HepG2 (cell line): ENCODE measurements at regions of chr7 and their contacts with region 1.

Region 1: GRCh38 chr7:54758702-54759592 is at the start of gene SEC61G:
- DNase-seq: peak; percentile 93
- ATAC-seq: peak; percentile 97
- H3K4me3 ChIP-seq: peak within 1 kb of the TSS; percentile 93 to 98 (median 98)
- H3K27ac ChIP-seq: peak within 1 kb of the TSS; percentile 74
- H3K4me1 ChIP-seq: peaks cover 47% of the 10 kb centered on the region
- H3K27me3 ChIP-seq: no peaks in the 10 kb centered on the region; a peak in 2 of 5 replicates
- CTCF ChIP-seq: no peak
- EP300 ChIP-seq: peak in 1 of 2 experiments; percentile 10; a peak in 1 of 4 replicates
- POLR2A ChIP-seq: peak; percentile 90 to 91
- RAD21 ChIP-seq: peak; percentile 11; the same call in 1 of the 2 replicates
- total RNA-seq, gene SEC61G: 328 and 434 TPM in 2 replicates

Region 2: GRCh38 chr7:54743580-54743979 is 15.4 kb before region 1 on chr7:
- CTCF ChIA-PET with region 1: no interaction called
- POLR2A ChIA-PET with region 1: interaction called, 10 read pairs
- in situ Hi-C with region 1: no loop called
- intact Hi-C with region 1: no loop called
- DNase-seq: no peak
- ATAC-seq: no peak
- H3K4me3 ChIP-seq: no peak overlapping the region
- H3K27ac ChIP-seq: no peak overlapping the region
- H3K4me1 ChIP-seq: no peaks in the 10 kb centered on the region
- H3K27me3 ChIP-seq: no peaks in the 10 kb centered on the region
- CTCF ChIP-seq: no peak
- EP300 ChIP-seq: no peak
- POLR2A ChIP-seq: no peak
- RAD21 ChIP-seq: no peak

Region 3: DNA sequence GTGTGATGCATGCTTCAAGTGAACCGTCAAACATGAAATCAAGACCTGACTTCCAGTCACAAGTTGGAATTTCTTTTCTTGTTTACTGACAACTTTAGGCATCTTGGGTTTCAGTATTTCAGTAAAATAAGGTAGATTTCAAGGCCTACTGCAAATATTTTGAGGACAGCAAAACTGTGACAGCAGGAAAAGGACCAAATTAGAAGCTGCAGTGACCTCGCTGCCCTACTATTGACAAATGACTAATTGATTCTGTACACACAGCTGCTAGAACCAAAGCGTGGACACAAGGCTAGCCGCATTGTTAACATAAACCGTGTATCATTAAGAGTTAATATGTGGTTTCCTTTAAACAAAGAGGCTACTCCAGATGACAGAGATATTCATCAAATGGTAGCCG is 105.7 kb after region 1 on chr7:
- CTCF ChIA-PET with region 1: no interaction called
- POLR2A ChIA-PET with region 1: no interaction called
- in situ Hi-C with region 1: no loop called
- intact Hi-C with region 1: no loop called
- DNase-seq: peak; percentile 44
- ATAC-seq: peak; percentile 75
- H3K4me3 ChIP-seq: no peak overlapping the region
- H3K27ac ChIP-seq: no peak overlapping the region
- H3K4me1 ChIP-seq: peaks cover 10% of the 10 kb centered on the region
- H3K27me3 ChIP-seq: peaks cover 0 to 3% of the 10 kb centered on the region in 2 experiments; a peak in 2 of 5 replicates
- CTCF ChIP-seq: no peak
- EP300 ChIP-seq: peak in 1 of 2 experiments; percentile 62; a peak in 1 of 4 replicates
- POLR2A ChIP-seq: no peak
- RAD21 ChIP-seq: no peak

Region 4: GRCh38 chr7:55415173-55415778 is 656.3 kb after region 1 on chr7:
- CTCF ChIA-PET with region 1: no interaction called
- POLR2A ChIA-PET with region 1: no interaction called
- in situ Hi-C with region 1: loop called (anchors 25 kb)
- intact Hi-C with region 1: no loop called
- DNase-seq: peak; percentile 62
- ATAC-seq: peak; percentile 95
- H3K4me3 ChIP-seq: no peak overlapping the region
- H3K27ac ChIP-seq: no peak overlapping the region
- H3K4me1 ChIP-seq: peaks cover 3% of the 10 kb centered on the region
- H3K27me3 ChIP-seq: no peaks in the 10 kb centered on the region
- CTCF ChIP-seq: peak; percentile 75
- EP300 ChIP-seq: no peak
- POLR2A ChIP-seq: no peak
- RAD21 ChIP-seq: peak; percentile 53; the same call in 1 of the 2 replicates